Activated naive CD4-positive, alpha-beta T cell treated with anti-CD3 and anti-CD28 coated beads, Interleukin-2, amount 10 ng/mL, durations not matched to agents 7 days and 5 days (primary cell): ENCODE measurements at regions of chr5 and their contacts with region 1.

Region 1: GRCh38 chr5:170338933-170339779 is 41.6 kb upstream of the LCP2 start:
- DNase-seq: peak; percentile 79
- H3K4me3 Mint-ChIP-seq: no peak overlapping the region
- H3K27ac Mint-ChIP-seq: no peak overlapping the region
- H3K4me1 Mint-ChIP-seq: peaks cover 38% of the 10 kb centered on the region
- H3K27me3 Mint-ChIP-seq: peaks cover 5% of the 10 kb centered on the region

Region 2: DNA sequence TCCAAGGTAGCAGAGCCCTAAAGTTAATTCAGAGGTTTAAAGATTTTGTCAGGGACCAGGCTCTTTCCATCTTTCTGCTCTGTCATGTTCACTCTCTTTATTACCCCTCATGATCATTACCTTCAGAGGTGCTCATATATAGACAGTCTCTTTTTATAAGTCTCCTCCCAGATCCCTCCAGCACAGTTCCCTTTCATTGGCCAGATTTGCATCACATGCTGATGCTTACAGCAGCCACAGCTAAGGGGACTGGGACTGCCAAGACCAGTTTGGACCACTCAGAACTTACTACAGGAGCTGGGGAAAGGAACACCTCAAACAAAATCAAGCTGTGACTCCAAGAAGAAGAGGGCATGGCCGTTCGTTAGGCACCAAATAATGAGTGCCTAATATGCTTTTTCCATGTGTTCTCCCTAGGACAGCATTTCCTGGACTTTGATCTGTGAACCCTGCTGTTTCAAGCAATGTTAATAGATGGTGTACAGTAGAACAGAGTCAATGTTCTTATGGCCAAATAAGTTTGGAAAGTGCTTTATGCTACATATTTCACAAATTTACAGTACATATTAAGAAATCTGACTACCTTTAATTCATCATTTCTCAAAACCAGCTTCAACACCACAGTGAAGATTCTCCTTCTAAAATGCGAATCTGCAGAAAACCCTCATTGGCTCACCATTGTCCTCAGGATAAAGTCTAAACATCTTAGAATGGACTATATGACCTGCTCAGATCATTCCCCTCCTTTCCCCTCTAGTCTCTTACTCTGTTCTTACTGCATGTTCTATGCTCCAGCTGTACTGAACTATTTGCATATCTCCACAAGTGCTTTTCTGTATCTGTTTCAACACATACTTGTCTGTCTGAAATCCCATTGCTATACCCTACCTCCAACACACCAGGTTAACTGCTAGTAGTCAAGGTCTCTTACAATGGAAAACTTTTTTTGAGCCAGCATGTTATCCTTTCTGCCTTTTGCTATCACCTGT is 103.0 kb before region 1 on chr5:
- CTCF ChIA-PET with region 1: interaction called, 218 read pairs
- DNase-seq: no peak
- H3K4me3 Mint-ChIP-seq: no peak overlapping the region
- H3K27ac Mint-ChIP-seq: no peak overlapping the region
- H3K4me1 Mint-ChIP-seq: peaks cover 2% of the 10 kb centered on the region
- H3K27me3 Mint-ChIP-seq: no peaks in the 10 kb centered on the region

Region 3: GRCh38 chr5:170262061-170263045 is 76.8 kb before region 1 on chr5:
- CTCF ChIA-PET with region 1: interaction called, 132 read pairs
- DNase-seq: peak; percentile 80
- H3K4me3 Mint-ChIP-seq: peak overlapping the region; percentile 65
- H3K27ac Mint-ChIP-seq: peak overlapping the region; percentile 96
- H3K4me1 Mint-ChIP-seq: peaks cover 94% of the 10 kb centered on the region
- H3K27me3 Mint-ChIP-seq: no peaks in the 10 kb centered on the region

Region 4: GRCh38 chr5:170267431-170268152 is 71.6 kb before region 1 on chr5:
- CTCF ChIA-PET with region 1: interaction called, 132 read pairs
- DNase-seq: peak; percentile 87
- H3K4me3 Mint-ChIP-seq: peak overlapping the region; percentile 40
- H3K27ac Mint-ChIP-seq: peak overlapping the region; percentile 87
- H3K4me1 Mint-ChIP-seq: peaks cover 92% of the 10 kb centered on the region
- H3K27me3 Mint-ChIP-seq: no peaks in the 10 kb centered on the region

Region 5: DNA sequence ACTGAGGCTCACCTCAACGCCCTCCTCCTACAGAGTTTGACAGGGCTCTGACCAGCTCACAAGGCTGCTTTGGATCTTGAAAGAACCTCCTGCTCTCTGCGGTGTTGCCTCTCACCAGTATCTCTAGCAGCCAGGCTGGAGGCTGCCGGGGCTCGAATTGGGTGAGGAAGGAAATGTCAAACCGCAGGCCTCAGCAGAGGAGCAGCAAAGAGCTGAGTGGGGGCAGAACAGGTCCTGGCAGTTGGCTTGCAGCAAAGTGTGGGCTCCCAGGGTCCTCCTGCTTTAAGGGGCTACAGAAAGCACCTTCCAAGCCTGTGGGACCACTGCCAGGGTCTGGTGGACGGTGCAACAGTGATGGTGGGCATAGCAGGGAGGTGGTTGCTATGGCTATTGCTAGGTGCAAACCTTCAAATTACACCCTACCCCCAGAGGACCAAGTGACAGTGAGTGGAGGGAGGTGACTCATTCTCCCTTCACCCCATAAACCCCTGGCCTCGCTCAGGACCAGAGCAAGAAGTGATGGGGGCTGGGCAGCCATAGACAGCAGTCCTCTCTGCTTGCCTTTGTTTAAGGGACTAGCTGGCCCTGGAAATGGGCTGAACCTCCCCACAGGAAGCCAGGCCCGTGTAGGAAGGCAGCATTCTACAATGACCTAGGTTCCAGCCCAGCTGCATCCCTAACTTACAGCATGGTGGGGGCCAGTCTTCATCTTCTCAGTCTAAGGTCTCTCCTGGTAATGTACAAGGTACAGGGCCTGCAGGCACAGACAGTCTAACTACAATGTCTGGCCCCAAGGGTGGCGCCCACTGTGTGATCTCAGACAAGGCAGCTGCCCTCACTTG is 60.3 kb before region 1 on chr5:
- CTCF ChIA-PET with region 1: interaction called, 109 read pairs
- DNase-seq: peak; percentile 93
- H3K4me3 Mint-ChIP-seq: peak overlapping the region; percentile 66
- H3K27ac Mint-ChIP-seq: peak overlapping the region; percentile 97
- H3K4me1 Mint-ChIP-seq: peaks cover 97% of the 10 kb centered on the region
- H3K27me3 Mint-ChIP-seq: no peaks in the 10 kb centered on the region

Region 6: DNA sequence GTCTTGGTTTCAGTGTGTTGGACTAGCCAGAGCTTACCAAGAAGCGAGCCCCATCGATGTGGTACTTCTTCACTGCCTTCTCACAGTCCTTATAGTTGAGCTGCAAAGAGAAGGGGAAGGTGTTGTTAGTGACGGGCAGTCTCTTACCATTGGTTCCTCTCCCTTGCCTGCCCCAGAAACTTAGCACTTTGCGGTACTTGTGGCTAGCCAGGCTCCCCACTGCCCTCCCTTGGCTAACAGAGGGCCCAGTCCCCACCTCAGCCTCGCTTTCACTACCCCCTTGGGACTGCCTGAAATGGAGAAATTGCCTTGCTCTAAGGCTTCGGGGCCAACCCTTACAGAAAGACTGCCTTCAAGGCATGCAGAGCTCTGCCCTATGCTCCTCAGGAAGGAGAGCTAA is 45.9 kb before region 1 on chr5:
- CTCF ChIA-PET with region 1: interaction called, 103 read pairs
- DNase-seq: peak; percentile 68
- H3K4me3 Mint-ChIP-seq: peak overlapping the region; percentile 100
- H3K27ac Mint-ChIP-seq: peak overlapping the region; percentile 79
- H3K4me1 Mint-ChIP-seq: peaks cover 70% of the 10 kb centered on the region
- H3K27me3 Mint-ChIP-seq: no peaks in the 10 kb centered on the region